CD14-positive monocyte (primary cell): ENCODE measurements at regions of chr12 and their contacts with region 1.

Region 1: DNA sequence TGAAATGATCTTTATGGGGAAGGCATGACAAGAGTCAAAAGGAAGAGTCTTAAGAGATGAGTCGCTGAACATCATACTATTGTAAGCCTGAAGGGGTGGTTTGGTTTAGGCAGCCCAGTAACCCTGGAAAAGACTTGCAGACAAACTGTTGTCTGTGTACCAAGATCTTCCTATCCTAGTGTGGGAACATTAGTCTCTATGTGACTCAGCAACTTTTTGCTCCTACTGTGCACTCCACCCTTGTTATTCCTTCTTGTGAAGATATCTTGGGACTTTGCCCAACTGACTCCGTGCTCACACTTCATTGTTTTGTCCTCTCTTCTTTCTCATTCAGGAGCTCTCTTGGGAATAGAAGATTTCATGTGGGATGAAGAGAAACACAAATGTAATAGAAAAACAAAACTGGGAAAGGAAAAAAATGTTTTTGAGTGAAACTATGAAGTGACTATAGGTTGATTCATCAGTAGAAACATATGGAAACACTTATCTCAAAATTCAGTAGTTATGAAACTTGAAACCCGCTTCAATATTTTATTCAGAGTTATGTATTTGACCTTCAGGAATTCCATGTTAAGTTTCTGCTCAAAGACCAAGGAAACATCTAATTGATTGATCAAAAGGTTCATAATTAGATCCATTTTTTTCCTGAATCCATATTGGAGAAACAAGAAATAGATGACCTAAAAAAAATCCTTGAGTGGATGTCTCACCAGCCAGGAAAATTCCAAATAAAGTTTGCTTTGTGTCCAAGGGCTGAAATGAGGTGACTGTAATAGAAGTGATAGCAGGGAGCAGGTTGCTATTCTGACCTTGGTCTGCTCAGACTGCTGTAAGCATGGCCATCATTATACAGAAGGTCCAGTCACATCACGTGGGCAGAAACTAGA is 67.2 kb downstream of the BTG1 start:
- DNase-seq: peak in 2 of 3 donors; percentile 58 to 64
- H3K4me3 ChIP-seq: peak overlapping the region in 1 of 3 experiments; percentile 20
- H3K4me3 Mint-ChIP-seq: peak overlapping the region in 1 of 2 donors; percentile 11
- H3K27ac ChIP-seq: peak overlapping the region in 1 of 2 donors; percentile 65
- H3K27ac Mint-ChIP-seq: peak overlapping the region; percentile 40 to 93 (median 83)
- H3K4me1 ChIP-seq: peaks cover 46 to 65% of the 10 kb centered on the region in 2 donors
- H3K4me1 Mint-ChIP-seq: peaks cover 75% of the 10 kb centered on the region
- H3K27me3 ChIP-seq: no peaks in the 10 kb centered on the region
- H3K27me3 Mint-ChIP-seq: no peaks in the 10 kb centered on the region
- CTCF ChIP-seq: no peak

Region 2: GRCh38 chr12:91127751-91128150 is 950.7 kb before region 1 on chr12:
- intact Hi-C with region 1: no loop called
- DNase-seq: no peak
- H3K4me3 ChIP-seq: no peak overlapping the region
- H3K4me3 Mint-ChIP-seq: no peak overlapping the region
- H3K27ac ChIP-seq: no peak overlapping the region
- H3K27ac Mint-ChIP-seq: peak overlapping the region in 1 of 7 donors; percentile 26
- H3K4me1 ChIP-seq: no peaks in the 10 kb centered on the region
- H3K4me1 Mint-ChIP-seq: no peaks in the 10 kb centered on the region
- H3K27me3 ChIP-seq: no peaks in the 10 kb centered on the region
- H3K27me3 Mint-ChIP-seq: peaks cover 0 to 4% (median 0%) of the 10 kb centered on the region in 3 donors
- CTCF ChIP-seq: no peak

Region 3: DNA sequence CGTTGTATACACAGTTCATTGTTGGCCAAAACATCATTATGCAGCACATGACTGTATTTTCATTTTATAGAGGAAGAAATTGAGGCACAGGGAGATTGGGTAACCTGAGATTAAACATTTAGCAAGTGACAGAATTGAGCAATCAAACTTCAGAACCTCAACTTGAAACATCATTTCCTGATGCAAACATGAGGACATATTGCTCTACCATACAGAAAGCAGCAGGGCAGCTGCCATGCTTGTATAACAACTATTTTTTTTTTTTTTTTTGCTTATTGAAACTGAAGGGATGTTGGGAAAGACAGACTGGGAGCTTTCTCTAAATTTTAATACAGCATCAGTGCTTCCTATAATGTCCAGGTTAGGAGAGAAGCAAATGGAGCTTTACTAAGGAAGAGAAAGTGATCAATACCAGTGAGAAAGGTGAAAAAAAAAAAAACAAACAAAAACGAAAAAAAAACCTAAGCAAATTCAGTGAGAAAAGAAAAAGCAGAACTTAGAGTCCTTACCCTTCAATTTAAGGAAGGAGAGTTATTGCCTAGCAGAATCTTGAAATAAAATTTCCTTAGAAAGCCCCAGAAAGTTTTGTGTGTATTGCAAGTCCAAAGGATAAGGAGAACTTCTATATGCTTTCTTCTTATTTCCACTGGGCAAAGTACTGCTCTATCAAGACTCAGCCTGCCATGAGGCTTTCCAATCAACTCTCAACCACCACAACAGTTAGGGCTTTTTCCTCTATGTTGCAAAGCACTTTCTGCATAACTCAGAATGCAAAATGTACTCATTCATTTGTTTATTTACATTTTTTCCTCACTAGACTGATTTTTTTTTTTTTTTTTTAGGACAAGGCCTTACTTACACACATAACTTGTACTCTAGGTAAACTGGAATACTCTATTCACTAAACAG is 45.6 kb after region 1 on chr12:
- intact Hi-C with region 1: loop called (anchors 5 to 10 kb)
- DNase-seq: peak; percentile 80 to 95 (median 93)
- H3K4me3 ChIP-seq: peak overlapping the region; percentile 18 to 71 (median 33)
- H3K4me3 Mint-ChIP-seq: peak overlapping the region; percentile 61 to 80
- H3K27ac ChIP-seq: peak overlapping the region; percentile 86 to 87
- H3K27ac Mint-ChIP-seq: peak overlapping the region; percentile 92 to 98 (median 95)
- H3K4me1 ChIP-seq: peaks cover 67 to 73% of the 10 kb centered on the region in 2 donors
- H3K4me1 Mint-ChIP-seq: peaks cover 61% of the 10 kb centered on the region
- H3K27me3 ChIP-seq: no peaks in the 10 kb centered on the region
- H3K27me3 Mint-ChIP-seq: peaks cover 0 to 3% (median 0%) of the 10 kb centered on the region in 3 donors
- CTCF ChIP-seq: no peak